ENCODE measurements at regions of chr9 and their contacts with region 1.

Region 1: DNA sequence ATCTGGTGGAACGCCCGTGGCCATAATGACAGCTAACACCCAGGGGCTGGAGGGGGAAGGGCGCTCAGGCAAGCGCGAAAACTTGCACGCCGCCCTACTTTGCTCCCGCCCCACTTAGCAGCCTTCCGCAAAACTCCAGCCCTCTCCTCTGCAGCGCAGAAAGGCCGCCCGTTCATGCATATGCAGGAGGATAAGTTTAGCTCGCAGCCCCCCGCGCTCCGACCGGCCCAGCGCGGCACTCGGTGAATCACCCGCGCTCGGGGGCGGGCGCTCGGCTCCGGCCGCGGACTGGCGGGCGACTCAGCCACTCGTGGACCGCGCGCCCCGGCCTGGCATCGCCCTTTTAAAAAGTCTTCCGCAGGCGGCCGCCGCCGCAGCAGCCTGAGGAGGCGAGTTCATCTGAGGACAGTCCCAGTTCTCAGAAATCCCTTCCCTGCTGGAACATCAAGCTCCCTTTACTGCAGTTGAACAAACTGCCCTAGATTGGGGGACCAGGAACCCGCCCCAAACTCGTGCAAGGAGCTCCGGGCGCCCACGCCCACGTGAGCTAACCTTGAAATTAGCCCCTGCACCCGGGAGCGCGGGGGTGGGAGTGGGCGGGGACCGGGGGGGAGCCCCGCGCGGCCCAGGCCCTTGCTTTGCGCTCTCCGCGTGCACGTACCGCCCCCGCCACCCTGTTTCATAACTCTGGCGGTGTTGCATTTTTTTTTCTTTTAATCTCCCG is 4.5 kb upstream of the KLF9 start:
- DNase-seq: peak; percentile 85 to 97
- H3K4me3 ChIP-seq: peak overlapping the region; percentile 82
- H3K27ac ChIP-seq: peak overlapping the region; percentile 97
- H3K4me1 ChIP-seq: peaks cover 23% of the 10 kb centered on the region
- H3K27me3 ChIP-seq: no peaks in the 10 kb centered on the region
- CTCF ChIP-seq: no peak

Region 2: DNA sequence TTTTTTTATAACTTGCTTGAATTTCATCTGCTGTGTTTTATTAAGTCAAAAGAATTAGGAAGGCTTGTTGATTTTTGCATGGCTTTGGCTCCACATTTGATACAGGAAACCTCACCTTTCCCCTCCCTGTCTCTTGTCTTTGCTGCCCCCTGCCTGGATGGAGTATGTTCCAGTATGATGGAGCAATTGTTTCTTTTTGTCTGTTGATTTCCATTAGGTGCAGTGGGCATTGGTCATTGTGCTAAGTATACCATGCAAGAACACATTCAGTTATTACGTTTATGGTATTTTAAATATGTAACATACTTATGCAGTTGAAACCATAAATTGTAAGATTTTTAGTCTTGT is 1225.3 kb before region 1 on chr9:
- CTCF ChIA-PET with region 1: no interaction called
- POLR2A ChIA-PET with region 1: interaction called, 24 read pairs
- intact Hi-C with region 1: no loop called
- DNase-seq: no peak
- H3K4me3 ChIP-seq: no peak overlapping the region
- H3K27ac ChIP-seq: no peak overlapping the region
- H3K4me1 ChIP-seq: peaks cover 38% of the 10 kb centered on the region; the same call in 1 of the 2 replicates
- H3K27me3 ChIP-seq: no peaks in the 10 kb centered on the region
- CTCF ChIP-seq: no peak

Region 3: GRCh38 chr9:69433392-69433791 is 985.6 kb before region 1 on chr9:
- CTCF ChIA-PET with region 1: no interaction called
- POLR2A ChIA-PET with region 1: no interaction called
- intact Hi-C with region 1: no loop called
- DNase-seq: peak in 1 of 2 experiments; percentile 55
- H3K4me3 ChIP-seq: no peak overlapping the region
- H3K27ac ChIP-seq: no peak overlapping the region
- H3K4me1 ChIP-seq: no peaks in the 10 kb centered on the region
- H3K27me3 ChIP-seq: no peaks in the 10 kb centered on the region
- CTCF ChIP-seq: no peak

Region 4: GRCh38 chr9:70049236-70049635 is 369.7 kb before region 1 on chr9:
- CTCF ChIA-PET with region 1: no interaction called
- POLR2A ChIA-PET with region 1: no interaction called
- intact Hi-C with region 1: loop called (anchors 1 kb)
- DNase-seq: peak; percentile 50 to 62
- H3K4me3 ChIP-seq: no peak overlapping the region
- H3K27ac ChIP-seq: no peak overlapping the region
- H3K4me1 ChIP-seq: peaks cover 35% of the 10 kb centered on the region
- H3K27me3 ChIP-seq: no peaks in the 10 kb centered on the region
- CTCF ChIP-seq: no peak

Region 5: DNA sequence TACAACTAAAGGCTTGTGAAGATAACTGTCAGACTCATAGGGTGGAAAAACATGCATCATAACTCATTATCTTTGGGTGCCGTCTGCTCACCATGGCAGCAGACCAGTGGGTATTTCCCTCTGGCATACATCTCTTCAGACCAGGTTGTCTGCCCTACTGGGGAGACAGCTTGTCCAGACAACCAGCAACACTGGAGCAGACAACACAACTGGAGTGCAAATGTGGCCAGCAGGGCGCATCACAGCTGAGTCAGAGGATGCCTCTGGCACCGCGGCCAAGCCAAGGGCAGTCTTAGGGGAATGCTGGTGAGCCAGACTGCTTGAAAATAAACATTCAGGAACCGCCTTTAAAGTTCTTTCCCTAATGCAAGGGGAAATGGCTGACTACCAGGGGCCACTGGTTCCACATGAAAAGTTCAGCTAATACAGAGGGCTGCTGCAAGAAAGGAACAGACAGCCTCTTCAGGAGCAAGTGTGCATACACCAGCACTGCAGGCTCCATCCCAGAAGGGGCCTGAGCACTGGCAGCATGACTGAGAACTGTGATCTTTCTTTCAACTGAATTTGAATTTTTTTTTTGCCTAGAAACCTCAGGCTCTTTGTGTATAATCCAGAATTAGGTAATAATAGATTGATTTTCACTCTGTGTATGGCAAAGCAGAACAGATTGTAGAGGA is 298.0 kb before region 1 on chr9:
- CTCF ChIA-PET with region 1: no interaction called
- POLR2A ChIA-PET with region 1: no interaction called
- intact Hi-C with region 1: no loop called
- DNase-seq: peak; percentile 50 to 70
- H3K4me3 ChIP-seq: no peak overlapping the region
- H3K27ac ChIP-seq: no peak overlapping the region
- H3K4me1 ChIP-seq: peaks cover 25% of the 10 kb centered on the region
- H3K27me3 ChIP-seq: no peaks in the 10 kb centered on the region
- CTCF ChIP-seq: no peak

Region 6: GRCh38 chr9:70484210-70485130 is 65.5 kb after region 1 on chr9:
- CTCF ChIA-PET with region 1: interaction called, 3 read pairs
- POLR2A ChIA-PET with region 1: interaction called, 7 read pairs
- intact Hi-C with region 1: loop called (anchors 1 kb)
- DNase-seq: peak; percentile 21 to 49
- H3K4me3 ChIP-seq: no peak overlapping the region
- H3K27ac ChIP-seq: no peak overlapping the region
- H3K4me1 ChIP-seq: peaks cover 14% of the 10 kb centered on the region; the same call in 1 of the 2 replicates
- H3K27me3 ChIP-seq: no peaks in the 10 kb centered on the region
- CTCF ChIP-seq: peak; percentile 80

Region 7: DNA sequence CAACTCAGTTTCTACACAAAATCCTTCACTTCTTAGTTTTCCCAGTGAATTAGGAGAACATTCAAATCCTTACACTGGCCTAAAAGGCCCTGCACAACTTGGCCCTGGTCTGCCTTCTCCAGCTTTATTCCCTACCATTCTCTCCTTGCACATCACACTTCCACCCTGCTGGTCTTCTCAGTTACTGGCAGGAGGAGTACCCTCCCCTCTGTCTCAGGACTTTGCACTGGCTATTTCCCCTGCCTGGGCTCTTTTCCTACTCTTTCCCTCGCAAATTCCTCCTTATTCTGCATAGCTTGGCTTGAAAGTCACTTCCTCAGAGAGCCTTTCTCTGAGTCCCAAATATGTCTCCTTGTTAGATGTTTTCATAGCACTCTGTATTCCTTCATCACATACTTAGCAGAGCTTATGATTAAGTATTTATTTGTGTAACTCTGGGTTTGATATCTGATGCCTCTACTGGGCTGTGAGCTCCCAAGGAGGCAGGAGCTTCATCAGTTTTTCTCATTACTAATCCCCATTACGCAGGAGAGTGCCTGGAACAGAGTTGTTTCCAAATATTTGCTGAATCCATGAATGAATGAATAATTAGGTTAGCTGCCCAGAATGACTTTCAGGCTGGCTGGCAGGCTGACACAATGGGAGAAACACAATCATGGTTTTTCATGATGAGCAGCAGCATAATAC is 155.3 kb after region 1 on chr9:
- CTCF ChIA-PET with region 1: no interaction called
- POLR2A ChIA-PET with region 1: interaction called, 3 read pairs
- intact Hi-C with region 1: loop called (anchors 10 kb)
- DNase-seq: no peak
- H3K4me3 ChIP-seq: no peak overlapping the region
- H3K27ac ChIP-seq: no peak overlapping the region
- H3K4me1 ChIP-seq: peaks cover 10% of the 10 kb centered on the region
- H3K27me3 ChIP-seq: no peaks in the 10 kb centered on the region
- CTCF ChIP-seq: no peak

Region 8: DNA sequence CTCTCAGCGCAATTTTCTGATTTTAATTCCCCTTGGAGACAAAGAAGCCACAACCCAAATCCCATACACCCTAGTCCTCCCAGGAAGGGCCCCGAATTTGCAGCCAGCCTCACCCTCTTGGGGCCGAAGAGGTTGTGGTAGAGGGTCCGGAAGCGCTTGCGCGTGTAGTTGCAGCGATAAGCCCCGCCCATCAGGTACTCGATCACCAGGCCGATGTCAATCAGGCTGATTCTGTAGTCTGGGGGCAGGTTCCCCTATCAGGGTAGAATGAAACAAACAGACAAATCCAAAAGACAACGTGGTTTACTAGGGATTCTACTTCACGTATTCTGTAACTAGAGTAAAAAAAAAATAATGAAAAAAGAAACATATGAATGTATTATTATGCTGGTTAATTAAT is 206.1 kb after region 1 on chr9:
- CTCF ChIA-PET with region 1: no interaction called
- POLR2A ChIA-PET with region 1: no interaction called
- intact Hi-C with region 1: no loop called
- DNase-seq: no peak
- H3K4me3 ChIP-seq: no peak overlapping the region
- H3K27ac ChIP-seq: no peak overlapping the region
- H3K4me1 ChIP-seq: no peaks in the 10 kb centered on the region
- H3K27me3 ChIP-seq: no peaks in the 10 kb centered on the region
- CTCF ChIP-seq: no peak

Region 9: GRCh38 chr9:72140582-72140981 is 1721.6 kb after region 1 on chr9:
- CTCF ChIA-PET with region 1: no interaction called
- POLR2A ChIA-PET with region 1: no interaction called
- intact Hi-C with region 1: loop called (anchors 5 kb)
- DNase-seq: peak; percentile 52 to 92
- H3K4me3 ChIP-seq: no peak overlapping the region
- H3K27ac ChIP-seq: peak overlapping the region; percentile 81
- H3K4me1 ChIP-seq: peaks cover 41% of the 10 kb centered on the region
- H3K27me3 ChIP-seq: no peaks in the 10 kb centered on the region
- CTCF ChIP-seq: no peak